Tibial artery (tissue), 4 donors: ENCODE measurements at regions of chr12 and their contacts with region 1.

Region 1: GRCh38 chr12:67943226-67943892 is 45.9 kb upstream of the IFNG-AS1 start:
- DNase-seq: peak in 1 of 2 donors; percentile 89
- H3K4me3 ChIP-seq: no peak overlapping the region
- H3K27ac ChIP-seq: peak overlapping the region in 1 of 2 donors; percentile 4
- H3K4me1 ChIP-seq: peaks cover 0 to 15% (median 2%) of the 10 kb centered on the region in 4 donors
- H3K27me3 ChIP-seq: no peaks in the 10 kb centered on the region
- CTCF ChIP-seq: peak; percentile 75 to 85

Region 2: GRCh38 chr12:67355578-67356379 is 587.6 kb before region 1 on chr12:
- intact Hi-C with region 1: loop called (anchors 5 kb)
- DNase-seq: no peak
- H3K4me3 ChIP-seq: no peak overlapping the region
- H3K27ac ChIP-seq: peak overlapping the region; percentile 23 to 48
- H3K4me1 ChIP-seq: peaks cover 0 to 24% (median 11%) of the 10 kb centered on the region in 4 donors
- H3K27me3 ChIP-seq: no peaks in the 10 kb centered on the region
- CTCF ChIP-seq: peak; percentile 35 to 56

Region 3: GRCh38 chr12:67433385-67434175 is 509.8 kb before region 1 on chr12:
- intact Hi-C with region 1: loop called (anchors 10 kb)
- DNase-seq: no peak
- H3K4me3 ChIP-seq: no peak overlapping the region
- H3K27ac ChIP-seq: peak overlapping the region; percentile 72 to 73
- H3K4me1 ChIP-seq: peaks cover 3 to 47% (median 30%) of the 10 kb centered on the region in 4 donors
- H3K27me3 ChIP-seq: no peaks in the 10 kb centered on the region
- CTCF ChIP-seq: no peak